BJ (cell line): ENCODE measurements at regions of chr2 and their contacts with region 1.

Region 1: GRCh38 chr2:88659538-88659916 is 31.9 kb upstream of the RPIA start:
- DNase-seq: peak; percentile 73
- H3K4me3 ChIP-seq: no peak overlapping the region
- H3K27me3 ChIP-seq: no peaks in the 10 kb centered on the region
- CTCF ChIP-seq: no peak

Region 2: DNA sequence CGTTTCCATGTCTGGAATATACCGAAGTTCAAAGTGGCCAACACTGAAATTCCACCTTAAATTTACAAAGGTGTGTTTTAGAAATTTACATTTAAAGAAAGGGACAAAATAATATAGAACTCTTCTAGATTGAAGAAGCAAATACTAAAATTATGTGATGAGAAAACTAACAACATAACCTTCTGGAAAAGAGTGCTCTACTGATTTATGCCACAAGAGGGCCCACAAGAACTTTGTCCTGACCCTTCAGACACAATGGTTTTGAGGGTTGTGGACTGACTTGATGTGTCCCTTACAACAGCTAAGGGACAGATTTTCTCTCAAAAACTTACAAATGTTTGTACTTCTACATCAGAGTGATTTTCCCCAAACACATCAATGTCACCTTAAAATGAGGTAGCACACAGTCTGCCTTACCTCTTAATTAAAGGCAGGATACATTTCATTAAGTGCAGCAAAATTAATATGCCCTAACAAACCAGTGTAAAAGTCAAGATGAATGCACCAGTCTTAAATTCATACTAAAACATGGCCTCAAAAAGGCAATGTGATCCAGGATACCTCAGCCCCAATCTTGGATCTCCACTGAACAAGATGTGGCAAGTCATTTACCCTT is 68.4 kb before region 1 on chr2:
- CTCF ChIA-PET with region 1: interaction called, 328 read pairs
- POLR2A ChIA-PET with region 1: no interaction called
- DNase-seq: no peak
- H3K4me3 ChIP-seq: no peak overlapping the region
- H3K27me3 ChIP-seq: no peaks in the 10 kb centered on the region
- CTCF ChIP-seq: peak; percentile 74

Region 3: DNA sequence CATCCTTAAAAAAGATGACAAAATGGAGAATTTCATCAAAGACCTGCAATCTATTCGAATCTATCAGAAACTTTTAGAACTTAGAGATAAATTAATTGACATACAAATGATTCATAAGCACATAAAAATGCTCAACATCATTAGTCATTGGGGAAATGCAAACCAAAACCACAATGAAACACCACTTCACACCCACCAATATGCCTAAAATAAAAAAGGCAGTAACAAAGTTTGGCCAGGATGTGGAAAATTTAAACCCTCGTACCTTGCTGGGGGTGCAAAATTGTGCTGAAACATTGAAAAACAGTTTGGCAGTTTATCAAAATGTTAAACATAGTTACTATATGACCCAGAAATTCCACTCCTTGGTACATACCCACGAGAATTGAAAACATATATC is 20.8 kb before region 1 on chr2:
- CTCF ChIA-PET with region 1: no interaction called
- POLR2A ChIA-PET with region 1: no interaction called
- DNase-seq: no peak
- H3K4me3 ChIP-seq: no peak overlapping the region
- H3K27me3 ChIP-seq: peaks cover 15% of the 10 kb centered on the region
- CTCF ChIP-seq: no peak